ENCODE measurements at regions of chr12 and their contacts with region 1.

Region 1: DNA sequence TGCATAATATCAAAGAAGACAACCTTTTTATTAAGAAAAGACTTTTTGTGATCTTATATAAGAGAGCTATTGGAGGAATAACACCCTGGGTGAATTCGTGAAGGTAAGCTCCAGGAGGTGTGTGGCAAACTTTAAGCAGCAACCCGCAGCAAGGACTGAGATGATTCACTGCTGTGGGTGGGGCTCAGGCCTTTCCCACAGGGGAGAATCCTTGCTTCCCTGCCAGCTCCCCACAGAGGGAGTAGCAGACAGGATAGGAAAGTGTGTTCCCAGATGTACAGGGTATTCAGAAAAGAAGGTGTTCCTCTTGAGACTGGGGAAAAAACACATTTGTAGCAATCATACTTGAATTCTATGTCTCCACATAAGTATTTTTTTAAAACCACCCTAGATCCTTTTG is 9.2 kb downstream of the NDUFA12 start:
- DNase-seq: no peak
- H3K4me3 ChIP-seq: no peak overlapping the region
- H3K27ac ChIP-seq: no peak overlapping the region
- H3K27me3 ChIP-seq: no peaks in the 10 kb centered on the region
- CTCF ChIP-seq: no peak

Region 2: GRCh38 chr12:94172973-94173372 is 821.3 kb before region 1 on chr12:
- CTCF ChIA-PET with region 1: no interaction called
- POLR2A ChIA-PET with region 1: interaction called, 10 read pairs
- DNase-seq: peak; percentile 97
- H3K4me3 ChIP-seq: no peak overlapping the region
- H3K27ac ChIP-seq: peak overlapping the region; percentile 12
- H3K27me3 ChIP-seq: peaks cover 7% of the 10 kb centered on the region
- CTCF ChIP-seq: no peak

Measured in AG04450 (cell line).